ENCODE measurements at regions of chr2 and their contacts with region 1.

Region 1: GRCh38 chr2:177212106-177212890 is at the start of gene HNRNPA3:
- DNase-seq: peak; percentile 100
- H3K4me3 Mint-ChIP-seq: peak within 1 kb of the TSS; percentile 94
- H3K27ac Mint-ChIP-seq: peak within 1 kb of the TSS; percentile 100
- H3K4me1 Mint-ChIP-seq: peaks cover 46% of the 10 kb centered on the region
- H3K27me3 Mint-ChIP-seq: no peaks in the 10 kb centered on the region
- total RNA-seq, gene HNRNPA3: 309 to 312 TPM

Region 2: GRCh38 chr2:177195194-177195593 is 17.1 kb before region 1 on chr2:
- CTCF ChIA-PET with region 1: interaction called, 16 read pairs
- POLR2A ChIA-PET with region 1: interaction called, 26 read pairs
- DNase-seq: no peak
- H3K4me3 Mint-ChIP-seq: no peak overlapping the region
- H3K27ac Mint-ChIP-seq: no peak overlapping the region
- H3K4me1 Mint-ChIP-seq: peaks cover 12% of the 10 kb centered on the region
- H3K27me3 Mint-ChIP-seq: no peaks in the 10 kb centered on the region

Region 3: GRCh38 chr2:177201919-177202346 is 10.4 kb before region 1 on chr2:
- CTCF ChIA-PET with region 1: interaction called, 16 read pairs
- POLR2A ChIA-PET with region 1: interaction called, 26 read pairs
- DNase-seq: no peak
- H3K4me3 Mint-ChIP-seq: no peak overlapping the region
- H3K27ac Mint-ChIP-seq: no peak overlapping the region
- H3K4me1 Mint-ChIP-seq: peaks cover 9% of the 10 kb centered on the region
- H3K27me3 Mint-ChIP-seq: no peaks in the 10 kb centered on the region

Region 4: DNA sequence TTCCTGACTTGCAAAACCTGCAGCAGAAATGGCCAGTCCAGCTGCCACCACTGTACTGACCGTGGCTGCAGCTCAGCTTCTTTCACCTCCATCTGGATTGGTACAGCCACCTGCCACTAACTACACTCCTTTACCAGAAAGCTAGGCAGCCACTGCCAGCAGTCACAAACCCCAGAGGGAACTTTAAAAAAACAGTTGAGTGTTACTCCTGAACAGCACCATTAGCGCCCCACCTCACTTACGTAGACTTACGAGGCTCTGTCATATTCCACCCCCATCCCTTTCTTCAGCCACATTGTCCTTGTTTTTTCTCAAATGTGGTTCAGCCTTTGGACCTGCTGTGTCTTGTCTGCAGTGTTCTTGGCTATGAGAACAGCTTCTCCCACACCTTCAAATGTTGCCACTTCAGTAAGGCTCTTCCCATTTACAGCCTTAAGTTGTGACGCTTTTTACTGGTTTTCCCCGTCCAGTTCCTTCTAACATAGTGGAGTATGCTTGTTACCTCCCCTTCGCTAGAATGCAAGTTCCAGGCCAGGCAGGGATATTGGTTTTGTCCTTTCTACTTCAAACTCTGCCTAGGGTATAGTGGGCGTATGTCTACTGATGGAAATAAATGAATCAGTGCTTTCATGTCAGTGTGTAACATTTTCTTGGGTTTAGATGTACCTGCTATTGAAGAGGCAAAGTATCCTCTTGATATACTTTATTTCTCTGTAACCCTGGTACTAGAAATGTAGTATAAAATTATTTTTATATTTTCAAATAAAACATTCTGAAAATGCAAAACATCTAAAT is 17.3 kb after region 1 on chr2:
- CTCF ChIA-PET with region 1: interaction called, 4 read pairs
- POLR2A ChIA-PET with region 1: interaction called, 27 read pairs
- DNase-seq: no peak
- H3K4me3 Mint-ChIP-seq: no peak overlapping the region
- H3K27ac Mint-ChIP-seq: peak overlapping the region; percentile 48
- H3K4me1 Mint-ChIP-seq: peaks cover 35% of the 10 kb centered on the region
- H3K27me3 Mint-ChIP-seq: no peaks in the 10 kb centered on the region

Region 5: GRCh38 chr2:177239932-177240630 is 27.8 kb after region 1 on chr2:
- CTCF ChIA-PET with region 1: interaction called, 3 read pairs
- POLR2A ChIA-PET with region 1: interaction called, 31 read pairs
- DNase-seq: peak; percentile 64
- H3K4me3 Mint-ChIP-seq: peak overlapping the region; percentile 34
- H3K27ac Mint-ChIP-seq: peak overlapping the region; percentile 84
- H3K4me1 Mint-ChIP-seq: peaks cover 74% of the 10 kb centered on the region
- H3K27me3 Mint-ChIP-seq: no peaks in the 10 kb centered on the region

Region 6: GRCh38 chr2:177254433-177255226 is 42.3 kb after region 1 on chr2:
- CTCF ChIA-PET with region 1: no interaction called
- POLR2A ChIA-PET with region 1: interaction called, 255 read pairs
- DNase-seq: no peak
- H3K4me3 Mint-ChIP-seq: no peak overlapping the region
- H3K27ac Mint-ChIP-seq: peak overlapping the region; percentile 61
- H3K4me1 Mint-ChIP-seq: peaks cover 92% of the 10 kb centered on the region
- H3K27me3 Mint-ChIP-seq: no peaks in the 10 kb centered on the region

Region 7: GRCh38 chr2:177392373-177393202 is 180.3 kb after region 1 on chr2 and contains the start of gene AGPS:
- CTCF ChIA-PET with region 1: interaction called, 3 read pairs
- POLR2A ChIA-PET with region 1: interaction called, 13 read pairs
- DNase-seq: peak; percentile 86
- H3K4me3 Mint-ChIP-seq: peak within 1 kb of the TSS; percentile 96
- H3K27ac Mint-ChIP-seq: peak within 1 kb of the TSS; percentile 80
- H3K4me1 Mint-ChIP-seq: peaks cover 51% of the 10 kb centered on the region
- H3K27me3 Mint-ChIP-seq: no peaks in the 10 kb centered on the region
- total RNA-seq, gene AGPS: 52.0 to 52.8 TPM

Region 8: GRCh38 chr2:177604271-177605065 is 392.2 kb after region 1 on chr2:
- CTCF ChIA-PET with region 1: no interaction called
- POLR2A ChIA-PET with region 1: no interaction called
- DNase-seq: no peak
- H3K4me3 Mint-ChIP-seq: no peak overlapping the region
- H3K27ac Mint-ChIP-seq: no peak overlapping the region
- H3K4me1 Mint-ChIP-seq: peaks cover under 1% of the 10 kb centered on the region
- H3K27me3 Mint-ChIP-seq: peaks cover 3% of the 10 kb centered on the region

Measured in activated CD4-positive, alpha-beta memory T cell treated with anti-CD3 and anti-CD28 coated beads, Interleukin-2, amount 10 ng/mL, durations not matched to agents 7 days and 5 days (primary cell).